ENCODE measurements at regions of chr7 and their contacts with region 1.

Region 1: DNA sequence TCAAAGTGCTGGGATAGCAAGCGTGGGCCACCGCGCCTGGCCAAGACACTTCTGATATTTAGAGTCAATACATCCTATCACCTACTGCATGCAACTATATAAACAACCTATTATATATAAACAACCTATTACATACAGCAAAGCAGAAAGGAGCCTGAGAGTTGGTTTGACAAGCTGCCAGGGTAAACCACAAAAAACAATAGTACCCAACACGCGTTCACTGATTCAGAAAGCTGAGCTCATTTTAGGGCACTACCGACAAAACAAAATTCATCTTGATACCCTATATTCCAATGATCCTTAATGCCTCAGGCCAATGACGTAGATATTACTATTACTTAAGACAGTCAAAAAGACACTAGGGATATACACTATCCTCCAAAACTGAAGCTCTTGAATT is 16.2 kb downstream of the MALSU1 start:
- DNase-seq: no peak
- ATAC-seq: no peak
- H3K4me3 ChIP-seq: no peak overlapping the region
- H3K4me3 Mint-ChIP-seq: no peak overlapping the region
- H3K27ac ChIP-seq: no peak overlapping the region
- H3K27ac Mint-ChIP-seq: peak overlapping the region in 1 of 9 donors; percentile 30
- H3K4me1 ChIP-seq: no peaks in the 10 kb centered on the region
- H3K4me1 Mint-ChIP-seq: peaks cover 0 to 14% (median 0%) of the 10 kb centered on the region in 7 donors
- H3K27me3 ChIP-seq: no peaks in the 10 kb centered on the region
- H3K27me3 Mint-ChIP-seq: peaks cover 0 to 8% (median 3%) of the 10 kb centered on the region in 5 donors

Region 2: DNA sequence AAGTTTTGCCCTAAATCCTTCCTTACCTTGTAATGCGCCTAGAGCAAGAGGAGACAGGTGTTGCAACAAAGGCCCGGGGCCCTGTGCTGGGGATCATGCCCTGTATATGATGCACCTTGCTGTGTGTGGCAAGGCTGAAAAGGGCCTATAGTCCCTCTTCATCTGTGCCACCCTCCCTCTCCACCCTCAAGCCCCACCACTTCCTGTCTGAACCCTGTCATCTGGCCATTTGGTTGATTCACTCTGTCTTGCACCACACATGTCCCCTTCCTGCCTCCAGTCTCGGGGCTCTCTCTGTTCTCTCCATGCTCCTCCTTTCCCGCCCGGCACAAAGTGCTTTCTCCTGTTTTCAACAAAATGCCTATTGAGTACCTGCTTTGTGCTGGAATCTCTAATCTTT is 27.8 kb before region 1 on chr7:
- CTCF ChIA-PET with region 1: no interaction called
- POLR2A ChIA-PET with region 1: no interaction called
- intact Hi-C with region 1: loop called in 1 of 2 experiments (anchors 1 kb)
- DNase-seq: no peak
- ATAC-seq: peak; percentile 18
- H3K4me3 ChIP-seq: no peak overlapping the region
- H3K4me3 Mint-ChIP-seq: no peak overlapping the region
- H3K27ac ChIP-seq: no peak overlapping the region
- H3K27ac Mint-ChIP-seq: peak overlapping the region in 4 of 9 donors; percentile 18 to 81 (median 42)
- H3K4me1 ChIP-seq: peaks cover 0 to 13% of the 10 kb centered on the region in 2 donors
- H3K4me1 Mint-ChIP-seq: peaks cover 0 to 25% (median 16%) of the 10 kb centered on the region in 7 donors
- H3K27me3 ChIP-seq: no peaks in the 10 kb centered on the region
- H3K27me3 Mint-ChIP-seq: no peaks in the 10 kb centered on the region

Region 3: DNA sequence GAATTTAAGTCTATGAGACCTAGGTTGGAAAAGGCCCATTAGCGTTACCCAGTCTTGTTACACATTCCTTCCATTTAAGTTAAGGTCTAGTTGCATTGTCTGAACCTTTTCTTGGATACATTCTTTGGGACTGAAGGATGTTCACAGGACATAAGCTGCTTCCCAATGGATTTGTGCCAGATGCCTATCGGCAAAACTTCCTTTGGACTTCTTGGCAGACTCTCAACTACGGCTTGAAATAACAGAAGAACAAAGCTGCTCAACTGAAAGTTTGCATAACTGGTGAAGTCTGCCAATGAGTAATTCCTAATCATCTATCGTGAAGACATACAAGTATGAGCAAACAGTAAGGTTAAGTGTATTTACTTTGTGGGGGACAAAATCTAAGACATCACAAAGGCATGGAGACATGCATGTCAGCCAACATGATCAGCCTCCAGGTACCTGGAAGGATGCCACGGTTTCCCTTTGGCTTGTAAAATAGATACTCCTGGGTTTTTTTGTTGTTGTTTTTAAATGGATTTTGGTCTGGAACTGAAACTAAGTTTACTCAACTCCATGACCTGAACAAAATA is 19.2 kb after region 1 on chr7:
- CTCF ChIA-PET with region 1: interaction called, 3 read pairs
- POLR2A ChIA-PET with region 1: interaction called, 3 read pairs
- intact Hi-C with region 1: loop called in 1 of 2 experiments (anchors 2 kb)
- DNase-seq: no peak
- ATAC-seq: no peak
- H3K4me3 ChIP-seq: no peak overlapping the region
- H3K4me3 Mint-ChIP-seq: no peak overlapping the region
- H3K27ac ChIP-seq: no peak overlapping the region
- H3K27ac Mint-ChIP-seq: no peak overlapping the region
- H3K4me1 ChIP-seq: no peaks in the 10 kb centered on the region
- H3K4me1 Mint-ChIP-seq: peaks cover 0 to 4% (median 0%) of the 10 kb centered on the region in 7 donors
- H3K27me3 ChIP-seq: no peaks in the 10 kb centered on the region
- H3K27me3 Mint-ChIP-seq: peaks cover 0 to 24% (median 3%) of the 10 kb centered on the region in 5 donors

Region 4: DNA sequence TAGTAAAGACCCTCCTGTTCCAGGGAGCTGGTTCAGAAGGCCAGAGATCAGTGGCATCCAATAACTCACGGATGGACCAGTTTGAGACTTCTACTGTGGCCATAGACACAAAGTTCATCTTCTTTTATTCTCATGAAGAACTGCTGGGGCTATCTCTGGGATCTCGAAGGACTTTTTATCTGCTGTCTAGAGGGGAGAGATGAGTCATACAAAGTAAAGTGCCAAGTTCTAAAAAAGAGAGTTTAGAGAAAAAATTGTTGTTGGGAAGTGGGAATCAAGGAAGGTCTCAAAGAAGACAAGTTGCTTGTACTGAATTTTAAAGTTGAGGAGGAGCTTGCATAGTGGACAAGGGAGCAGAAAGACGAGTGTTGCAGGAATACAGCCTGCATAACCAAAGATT is 356.7 kb after region 1 on chr7:
- CTCF ChIA-PET with region 1: no interaction called
- POLR2A ChIA-PET with region 1: no interaction called
- intact Hi-C with region 1: no loop called
- DNase-seq: no peak
- ATAC-seq: no peak
- H3K4me3 ChIP-seq: no peak overlapping the region
- H3K4me3 Mint-ChIP-seq: no peak overlapping the region
- H3K27ac ChIP-seq: no peak overlapping the region
- H3K27ac Mint-ChIP-seq: no peak overlapping the region
- H3K4me1 ChIP-seq: no peaks in the 10 kb centered on the region
- H3K4me1 Mint-ChIP-seq: no peaks in the 10 kb centered on the region
- H3K27me3 ChIP-seq: no peaks in the 10 kb centered on the region
- H3K27me3 Mint-ChIP-seq: peaks cover 0 to 34% (median 14%) of the 10 kb centered on the region in 5 donors

Measured in naive thymus-derived CD4-positive, alpha-beta T cell (primary cell).